Dorsolateral prefrontal cortex (tissue), 120 donors: ENCODE measurements at regions of chr10 and their contacts with region 1.

Region 1: GRCh38 chr10:22655311-22655981 is 58.9 kb downstream of the PIP4K2A start:
- DNase-seq: no peak
- H3K4me3 ChIP-seq: peak overlapping the region in 3 of 59 donors; percentile 0 to 22 (median 2)
- H3K27ac ChIP-seq: peak overlapping the region in 31 of 59 donors; percentile 0 to 82 (median 39)
- H3K27me3 ChIP-seq: no peaks in the 10 kb centered on the region
- CTCF ChIP-seq: no peak

Region 2: DNA sequence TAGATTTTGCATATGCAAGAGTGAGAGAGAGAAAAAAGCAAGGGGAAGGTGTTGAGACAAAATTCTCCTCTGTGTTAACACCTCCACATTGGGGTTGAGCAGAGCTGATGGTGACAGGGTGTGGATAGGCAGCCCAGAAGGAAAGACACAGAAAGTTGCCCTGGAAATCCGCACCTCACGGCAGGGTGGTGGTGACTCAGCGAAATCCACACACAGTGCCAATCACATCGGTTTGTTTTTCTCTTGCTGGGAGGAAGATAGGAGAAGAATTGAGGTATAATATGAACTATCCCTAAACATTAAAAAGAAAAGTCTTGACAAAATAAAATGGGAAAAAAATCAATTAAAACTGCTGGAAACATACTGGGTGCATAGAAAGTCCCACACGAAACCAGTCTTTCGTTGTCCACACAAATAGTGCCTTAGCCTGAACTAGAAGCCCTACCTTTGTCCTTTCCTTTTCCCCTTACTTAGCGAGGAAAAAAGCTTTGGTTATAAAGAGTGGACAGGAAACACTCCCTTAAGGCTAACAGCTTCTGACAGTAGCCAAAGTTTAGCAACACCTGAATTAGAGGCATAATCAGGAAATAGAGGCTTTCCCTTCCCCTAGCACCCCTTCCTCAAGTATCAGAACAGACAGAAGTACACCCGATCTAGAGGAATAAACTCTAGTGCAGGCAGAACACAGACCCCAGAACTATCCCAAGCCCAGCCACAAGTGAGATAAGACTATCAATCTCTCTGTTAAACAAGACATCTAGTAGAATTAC is 612.7 kb before region 1 on chr10:
- intact Hi-C with region 1: no loop called
- DNase-seq: no peak
- H3K4me3 ChIP-seq: no peak overlapping the region
- H3K27ac ChIP-seq: no peak overlapping the region
- H3K27me3 ChIP-seq: peaks cover 0 to 15% (median 0%) of the 10 kb centered on the region in 45 donors
- CTCF ChIP-seq: no peak

Region 3: GRCh38 chr10:22505911-22506685 is 149.3 kb before region 1 on chr10:
- intact Hi-C with region 1: no loop called
- DNase-seq: peak in 5 of 10 donors; percentile 31 to 60 (median 44)
- H3K4me3 ChIP-seq: no peak overlapping the region
- H3K27ac ChIP-seq: no peak overlapping the region
- H3K27me3 ChIP-seq: no peaks in the 10 kb centered on the region
- CTCF ChIP-seq: no peak

Region 4: GRCh38 chr10:22704471-22704911 is 49.0 kb after region 1 on chr10:
- intact Hi-C with region 1: loop called in 1 of 2 experiments (anchors 10 kb)
- DNase-seq: no peak
- H3K4me3 ChIP-seq: peak overlapping the region in 11 of 59 donors; percentile 0 to 28 (median 6)
- H3K27ac ChIP-seq: peak overlapping the region in 23 of 59 donors; percentile 4 to 96 (median 46)
- H3K27me3 ChIP-seq: no peaks in the 10 kb centered on the region
- CTCF ChIP-seq: no peak